GM12878 (cell line): ENCODE measurements at regions of chr9 and their contacts with region 1.

Region 1: GRCh38 chr9:35616681-35617459 is 1.3 kb downstream of the CD72 start:
- DNase-seq: no peak
- ATAC-seq: peak; percentile 71
- H3K4me3 ChIP-seq: peak overlapping the region; percentile 72
- H3K27ac ChIP-seq: peak overlapping the region; percentile 57
- H3K4me1 ChIP-seq: peaks cover 44% of the 10 kb centered on the region
- H3K27me3 ChIP-seq: no peaks in the 10 kb centered on the region; a peak in 1 of 4 replicates
- CTCF ChIP-seq: peak; percentile 21 to 37 (median 34); a peak in 4 of 6 replicates
- EP300 ChIP-seq: no peak
- POLR2A ChIP-seq: peak; percentile 80
- RAD21 ChIP-seq: 0 out of 2 replicates have a peak, but pooled peaks have one; percentile 31

Region 2: DNA sequence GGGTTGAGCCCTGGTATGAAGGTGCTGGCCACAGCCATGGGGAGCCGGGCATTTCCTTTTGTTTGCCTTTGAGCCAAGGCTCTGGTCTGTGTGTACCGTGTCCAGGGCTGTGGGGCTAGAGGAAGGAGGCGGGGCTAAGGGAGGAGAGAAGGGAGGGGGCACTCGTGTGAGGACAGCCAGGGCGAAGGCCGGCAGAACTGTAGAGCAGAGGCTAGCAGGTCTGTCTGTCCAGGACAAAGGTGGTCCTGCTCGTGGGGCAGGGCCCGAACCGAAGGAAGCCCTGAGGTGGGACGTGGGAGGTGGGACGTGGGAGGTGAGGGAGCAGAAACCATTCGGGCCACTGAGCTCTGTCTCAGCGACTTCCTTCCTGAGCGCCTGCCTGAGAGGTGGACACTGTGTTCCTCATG is 53.1 kb before region 1 on chr9:
- CTCF ChIA-PET with region 1: no interaction called
- POLR2A ChIA-PET with region 1: no interaction called
- RAD21 ChIA-PET with region 1: no interaction called
- SMC1A ChIA-PET with region 1: no interaction called
- in situ Hi-C with region 1: no loop called
- intact Hi-C with region 1: no loop called
- DNase-seq: no peak
- ATAC-seq: peak; percentile 24; the same call in 2 of the 3 replicates
- H3K4me3 ChIP-seq: no peak overlapping the region
- H3K27ac ChIP-seq: no peak overlapping the region
- H3K4me1 ChIP-seq: peaks cover 6% of the 10 kb centered on the region; the same call in 1 of the 2 replicates
- H3K27me3 ChIP-seq: no peaks in the 10 kb centered on the region
- CTCF ChIP-seq: no peak
- EP300 ChIP-seq: no peak
- POLR2A ChIP-seq: no peak
- RAD21 ChIP-seq: no peak

Region 3: DNA sequence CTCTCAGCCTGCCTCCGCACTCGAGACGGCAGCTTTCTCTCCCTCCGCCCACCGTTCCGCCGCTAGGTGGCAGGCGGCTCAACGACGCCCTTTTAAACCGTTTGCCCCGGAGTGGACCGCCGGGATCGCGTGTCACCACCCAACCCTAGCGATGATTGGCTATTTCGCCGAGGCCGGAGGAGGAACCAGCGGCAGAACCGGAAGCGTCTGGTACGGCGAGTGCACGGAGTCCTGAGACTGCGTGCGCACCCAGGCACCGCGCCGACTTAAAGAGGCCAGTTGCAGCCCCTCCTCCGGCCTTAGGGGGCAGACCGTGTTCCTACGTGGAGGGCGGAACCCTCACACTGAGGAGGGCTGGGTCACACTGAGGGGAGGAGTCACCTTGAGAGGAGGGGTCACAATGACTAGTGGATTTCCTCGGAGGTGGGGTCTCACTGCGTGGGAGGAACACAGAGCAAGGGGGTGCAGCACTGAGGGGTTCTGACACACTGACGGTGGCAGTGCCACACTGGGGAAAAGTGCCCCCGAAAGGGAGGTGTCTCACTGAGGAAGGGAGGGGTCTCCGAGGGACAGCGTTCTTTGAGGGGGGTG is 12.8 kb before region 1 on chr9:
- CTCF ChIA-PET with region 1: interaction called, 13 read pairs
- POLR2A ChIA-PET with region 1: interaction called, 18 read pairs
- RAD21 ChIA-PET with region 1: interaction called, 11 read pairs
- SMC1A ChIA-PET with region 1: interaction called, 13 read pairs
- in situ Hi-C with region 1: no loop called
- intact Hi-C with region 1: no loop called
- DNase-seq: peak; percentile 98
- ATAC-seq: peak; percentile 97
- H3K4me3 ChIP-seq: peak overlapping the region; percentile 77
- H3K27ac ChIP-seq: peak overlapping the region; percentile 73
- H3K4me1 ChIP-seq: peaks cover 8% of the 10 kb centered on the region
- H3K27me3 ChIP-seq: no peaks in the 10 kb centered on the region
- CTCF ChIP-seq: peak; percentile 81 to 98 (median 90)
- EP300 ChIP-seq: no peak
- POLR2A ChIP-seq: peak; percentile 81
- RAD21 ChIP-seq: peak; percentile 76

Region 4: GRCh38 chr9:35628389-35628991 is 11.6 kb after region 1 on chr9:
- CTCF ChIA-PET with region 1: interaction called, 15 read pairs
- POLR2A ChIA-PET with region 1: interaction called, 13 read pairs
- RAD21 ChIA-PET with region 1: interaction called, 7 read pairs
- SMC1A ChIA-PET with region 1: interaction called, 18 read pairs
- in situ Hi-C with region 1: no loop called
- intact Hi-C with region 1: no loop called
- DNase-seq: no peak
- ATAC-seq: no peak
- H3K4me3 ChIP-seq: no peak overlapping the region
- H3K27ac ChIP-seq: no peak overlapping the region
- H3K4me1 ChIP-seq: peaks cover 13% of the 10 kb centered on the region
- H3K27me3 ChIP-seq: no peaks in the 10 kb centered on the region
- CTCF ChIP-seq: no peak
- EP300 ChIP-seq: no peak
- POLR2A ChIP-seq: no peak
- RAD21 ChIP-seq: no peak

Region 5: GRCh38 chr9:35636135-35636876 is 19.4 kb after region 1 on chr9:
- CTCF ChIA-PET with region 1: interaction called, 9 read pairs
- POLR2A ChIA-PET with region 1: interaction called, 13 read pairs
- RAD21 ChIA-PET with region 1: interaction called, 16 read pairs
- SMC1A ChIA-PET with region 1: interaction called, 23 read pairs
- in situ Hi-C with region 1: no loop called
- intact Hi-C with region 1: no loop called
- DNase-seq: no peak
- ATAC-seq: no peak; the same call in 1 of the 3 replicates
- H3K4me3 ChIP-seq: no peak overlapping the region
- H3K27ac ChIP-seq: no peak overlapping the region
- H3K4me1 ChIP-seq: peaks cover 25% of the 10 kb centered on the region
- H3K27me3 ChIP-seq: no peaks in the 10 kb centered on the region
- CTCF ChIP-seq: no peak
- EP300 ChIP-seq: no peak
- POLR2A ChIP-seq: no peak
- RAD21 ChIP-seq: no peak

Region 6: DNA sequence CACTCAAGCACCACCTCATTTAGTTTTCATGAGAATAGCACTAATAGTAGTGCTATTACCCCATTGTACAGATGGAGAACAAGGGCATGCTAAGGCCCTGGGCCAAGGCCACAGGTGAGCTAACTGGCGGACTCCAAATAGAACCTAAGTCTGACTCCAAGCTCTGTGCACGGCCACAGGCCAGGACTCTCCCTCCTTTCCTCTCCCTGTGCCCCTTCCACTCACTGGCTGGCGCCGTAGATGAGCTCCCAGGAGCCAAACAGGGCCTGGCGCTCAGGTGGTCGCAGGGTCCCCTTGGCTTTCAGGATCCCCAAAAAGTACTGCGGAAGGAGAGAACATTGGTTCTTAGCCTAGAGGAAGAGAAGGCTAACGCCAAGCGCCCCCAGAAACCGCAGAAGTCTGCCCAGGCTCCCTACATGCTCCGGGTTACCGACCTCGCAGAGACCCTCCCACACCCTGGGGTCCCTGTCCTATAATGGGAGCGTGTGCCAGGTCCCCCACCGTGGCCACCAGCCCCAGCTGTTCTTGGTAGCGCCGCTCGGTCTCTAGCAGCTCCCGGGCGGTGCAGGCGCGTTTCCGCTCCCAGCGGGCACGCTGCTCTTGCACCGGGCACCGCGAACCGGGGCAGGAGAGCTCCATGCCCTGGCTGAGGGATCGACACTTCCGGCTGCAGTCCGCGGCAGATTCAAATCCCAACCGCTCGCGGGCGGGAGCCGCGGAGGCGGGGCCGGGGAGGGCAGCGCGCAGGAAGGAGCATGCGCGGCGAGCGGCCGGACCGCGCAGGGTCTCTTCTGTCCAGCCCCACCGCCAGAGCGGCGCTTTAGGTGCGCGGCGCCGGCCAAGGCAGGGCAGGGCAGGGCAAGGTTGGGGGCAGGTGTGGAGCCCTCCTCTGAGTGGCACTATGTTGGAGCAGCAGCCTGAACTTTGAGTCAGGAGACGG is 47.9 kb after region 1 on chr9 and contains the start of gene ARHGEF39:
- CTCF ChIA-PET with region 1: interaction called, 17 read pairs
- POLR2A ChIA-PET with region 1: interaction called, 22 read pairs
- RAD21 ChIA-PET with region 1: interaction called, 7 read pairs
- SMC1A ChIA-PET with region 1: interaction called, 6 read pairs
- in situ Hi-C with region 1: no loop called
- intact Hi-C with region 1: no loop called
- DNase-seq: no peak
- ATAC-seq: peak; percentile 92
- H3K4me3 ChIP-seq: peak within 1 kb of the TSS; percentile 79
- H3K27ac ChIP-seq: peak within 1 kb of the TSS; percentile 85
- H3K4me1 ChIP-seq: peaks cover 33% of the 10 kb centered on the region
- H3K27me3 ChIP-seq: no peaks in the 10 kb centered on the region
- CTCF ChIP-seq: peak; percentile 15 to 44 (median 18); a peak in 3 of 6 replicates
- EP300 ChIP-seq: no peak
- POLR2A ChIP-seq: peak; percentile 83
- RAD21 ChIP-seq: 0 out of 2 replicates have a peak, but pooled peaks have one; percentile 7
- polyA plus RNA-seq, gene ARHGEF39: 2.0 to 5.0 TPM

Region 7: GRCh38 chr9:36433393-36433792 is 816.5 kb after region 1 on chr9:
- CTCF ChIA-PET with region 1: no interaction called
- POLR2A ChIA-PET with region 1: no interaction called
- RAD21 ChIA-PET with region 1: no interaction called
- SMC1A ChIA-PET with region 1: no interaction called
- in situ Hi-C with region 1: no loop called
- intact Hi-C with region 1: no loop called
- DNase-seq: no peak
- ATAC-seq: no peak
- H3K4me3 ChIP-seq: no peak overlapping the region
- H3K27ac ChIP-seq: no peak overlapping the region
- H3K4me1 ChIP-seq: no peaks in the 10 kb centered on the region
- H3K27me3 ChIP-seq: no peaks in the 10 kb centered on the region
- CTCF ChIP-seq: no peak
- EP300 ChIP-seq: no peak
- POLR2A ChIP-seq: no peak
- RAD21 ChIP-seq: no peak